Heart left ventricle (tissue), 16 donors: ENCODE measurements at regions of chr9 and their contacts with region 1.

Region 1: GRCh38 chr9:17669206-17669605 is 90.3 kb downstream of the SH3GL2 start:
- DNase-seq: no peak
- ATAC-seq: no peak
- H3K4me3 ChIP-seq: no peak overlapping the region
- H3K27ac ChIP-seq: no peak overlapping the region
- H3K4me1 ChIP-seq: no peaks in the 10 kb centered on the region
- H3K27me3 ChIP-seq: no peaks in the 10 kb centered on the region
- CTCF ChIP-seq: no peak
- POLR2A ChIP-seq: no peak

Region 2: GRCh38 chr9:17613763-17614162 is 55.4 kb before region 1 on chr9:
- intact Hi-C with region 1: no loop called
- DNase-seq: no peak
- ATAC-seq: no peak
- H3K4me3 ChIP-seq: no peak overlapping the region
- H3K27ac ChIP-seq: no peak overlapping the region
- H3K4me1 ChIP-seq: peaks cover 0 to 14% (median 0%) of the 10 kb centered on the region in 12 donors
- H3K27me3 ChIP-seq: no peaks in the 10 kb centered on the region
- CTCF ChIP-seq: no peak
- POLR2A ChIP-seq: no peak

Region 3: DNA sequence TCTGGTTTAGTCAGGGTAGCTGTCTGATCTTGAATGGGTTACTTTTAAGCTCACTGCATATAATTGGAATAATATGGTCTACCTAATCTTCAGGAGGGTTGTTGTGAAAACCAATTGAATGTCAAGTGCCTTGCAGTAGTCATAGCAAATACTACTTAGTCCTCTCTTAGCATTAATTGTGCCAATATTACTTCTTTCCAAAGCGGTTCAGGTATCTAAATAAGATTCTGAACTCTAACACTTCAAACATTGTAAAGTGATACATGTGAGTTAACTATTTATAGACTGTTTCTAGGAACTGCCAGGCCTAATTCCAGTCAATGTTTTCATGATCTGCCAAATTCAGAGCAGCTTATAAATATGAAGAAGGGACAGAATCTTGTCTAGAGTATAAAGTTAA is 49.8 kb after region 1 on chr9:
- intact Hi-C with region 1: loop called in 1 of 10 experiments (anchors 10 kb)
- DNase-seq: no peak
- ATAC-seq: peak in 2 of 4 donors; percentile 56 to 61
- H3K4me3 ChIP-seq: no peak overlapping the region
- H3K27ac ChIP-seq: no peak overlapping the region
- H3K4me1 ChIP-seq: peaks cover 0 to 5% (median 0%) of the 10 kb centered on the region in 12 donors
- H3K27me3 ChIP-seq: no peaks in the 10 kb centered on the region
- CTCF ChIP-seq: no peak
- POLR2A ChIP-seq: no peak

Region 4: DNA sequence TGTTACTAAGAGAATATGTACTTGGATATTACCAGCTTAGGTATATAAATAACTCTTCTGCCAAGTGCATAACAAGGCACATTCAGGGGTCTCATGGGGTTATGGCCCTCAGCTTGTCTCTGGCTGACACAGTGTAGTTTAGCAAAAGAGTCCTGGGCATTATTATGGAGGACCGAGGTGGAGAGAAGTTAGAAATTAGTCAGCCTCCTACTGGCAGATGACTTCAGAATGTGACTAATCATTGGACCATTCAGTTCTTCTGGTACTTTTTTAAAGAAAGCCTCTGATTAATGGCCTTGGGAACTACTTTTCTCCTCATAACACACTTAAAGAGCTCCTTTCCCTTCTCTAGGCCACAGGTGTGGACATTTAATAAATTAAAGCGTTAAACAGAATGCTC is 88.6 kb after region 1 on chr9:
- intact Hi-C with region 1: loop called in 1 of 10 experiments (anchors 10 kb)
- DNase-seq: no peak
- ATAC-seq: no peak
- H3K4me3 ChIP-seq: no peak overlapping the region
- H3K27ac ChIP-seq: no peak overlapping the region
- H3K4me1 ChIP-seq: no peaks in the 10 kb centered on the region
- H3K27me3 ChIP-seq: no peaks in the 10 kb centered on the region
- CTCF ChIP-seq: no peak
- POLR2A ChIP-seq: no peak